ENCODE measurements at regions of chr9 and their contacts with region 1.

Region 1: GRCh38 chr9:4750023-4750673 is 9.1 kb upstream of the AK3 start:
- DNase-seq: no peak
- ATAC-seq: no peak
- H3K4me3 ChIP-seq: no peak overlapping the region
- H3K27ac ChIP-seq: no peak overlapping the region
- H3K4me1 ChIP-seq: no peaks in the 10 kb centered on the region
- H3K27me3 ChIP-seq: no peaks in the 10 kb centered on the region

Region 2: GRCh38 chr9:4508246-4508906 is 241.8 kb before region 1 on chr9:
- intact Hi-C with region 1: no loop called
- DNase-seq: no peak
- ATAC-seq: no peak
- H3K4me3 ChIP-seq: no peak overlapping the region
- H3K27ac ChIP-seq: no peak overlapping the region
- H3K4me1 ChIP-seq: no peaks in the 10 kb centered on the region
- H3K27me3 ChIP-seq: no peaks in the 10 kb centered on the region

Region 3: GRCh38 chr9:5263351-5264218 is 513.4 kb after region 1 on chr9:
- intact Hi-C with region 1: loop called in 1 of 2 experiments (anchors 10 kb)
- DNase-seq: no peak
- ATAC-seq: no peak
- H3K4me3 ChIP-seq: no peak overlapping the region
- H3K27ac ChIP-seq: no peak overlapping the region
- H3K4me1 ChIP-seq: peaks cover 0 to 2% of the 10 kb centered on the region in 2 donors
- H3K27me3 ChIP-seq: no peaks in the 10 kb centered on the region

Region 4: DNA sequence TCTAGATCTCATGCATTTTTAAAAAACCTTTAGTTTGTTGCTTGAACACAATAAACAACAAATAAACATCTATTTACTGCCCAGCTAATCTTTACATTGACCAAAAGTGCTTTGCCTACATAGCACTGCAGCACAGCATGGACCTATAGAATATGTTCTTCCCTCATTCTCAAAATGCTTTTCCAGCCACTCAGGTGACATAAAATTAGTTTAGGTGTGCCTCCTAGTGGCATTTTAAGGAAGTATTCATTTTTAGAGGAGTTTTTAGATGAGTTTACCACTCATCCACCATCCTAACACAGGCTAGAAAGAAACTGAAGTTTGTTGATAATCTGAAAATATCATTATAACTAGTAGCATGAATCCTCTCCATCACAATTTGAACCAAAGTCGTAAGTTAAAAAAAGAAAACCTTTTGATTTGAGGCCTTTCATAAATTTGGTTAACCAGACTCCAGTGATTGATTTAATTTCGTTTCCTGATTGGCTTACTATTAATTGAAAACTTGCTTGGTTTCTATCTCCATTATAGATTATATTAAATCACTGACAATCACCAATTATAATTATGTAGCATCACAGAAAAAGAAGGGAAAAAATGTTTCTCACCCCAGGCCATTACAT is 675.0 kb after region 1 on chr9:
- intact Hi-C with region 1: loop called in 1 of 2 experiments (anchors 5 kb)
- DNase-seq: no peak
- ATAC-seq: no peak
- H3K4me3 ChIP-seq: no peak overlapping the region
- H3K27ac ChIP-seq: no peak overlapping the region
- H3K4me1 ChIP-seq: no peaks in the 10 kb centered on the region
- H3K27me3 ChIP-seq: no peaks in the 10 kb centered on the region

Region 5: GRCh38 chr9:5437254-5438216 is 687.4 kb after region 1 on chr9 and contains the start of gene PLGRKT:
- intact Hi-C with region 1: loop called in 1 of 2 experiments (anchors 5 kb)
- DNase-seq: peak; percentile 97 to 98
- ATAC-seq: peak; percentile 99
- H3K4me3 ChIP-seq: peak within 1 kb of the TSS; percentile 30 to 66
- H3K27ac ChIP-seq: peak within 1 kb of the TSS; percentile 1 to 86
- H3K4me1 ChIP-seq: no peaks in the 10 kb centered on the region
- H3K27me3 ChIP-seq: no peaks in the 10 kb centered on the region
- total RNA-seq, gene PLGRKT: 8.8 to 10.6 TPM

Region 6: GRCh38 chr9:5593904-5594303 is 843.8 kb after region 1 on chr9:
- intact Hi-C with region 1: loop called (anchors 10 kb)
- DNase-seq: no peak
- ATAC-seq: no peak
- H3K4me3 ChIP-seq: no peak overlapping the region
- H3K27ac ChIP-seq: no peak overlapping the region
- H3K4me1 ChIP-seq: no peaks in the 10 kb centered on the region
- H3K27me3 ChIP-seq: no peaks in the 10 kb centered on the region

Measured in aorta (tissue), 5 donors.